ENCODE measurements at regions of chr16 and their contacts with region 1.

Region 1: DNA sequence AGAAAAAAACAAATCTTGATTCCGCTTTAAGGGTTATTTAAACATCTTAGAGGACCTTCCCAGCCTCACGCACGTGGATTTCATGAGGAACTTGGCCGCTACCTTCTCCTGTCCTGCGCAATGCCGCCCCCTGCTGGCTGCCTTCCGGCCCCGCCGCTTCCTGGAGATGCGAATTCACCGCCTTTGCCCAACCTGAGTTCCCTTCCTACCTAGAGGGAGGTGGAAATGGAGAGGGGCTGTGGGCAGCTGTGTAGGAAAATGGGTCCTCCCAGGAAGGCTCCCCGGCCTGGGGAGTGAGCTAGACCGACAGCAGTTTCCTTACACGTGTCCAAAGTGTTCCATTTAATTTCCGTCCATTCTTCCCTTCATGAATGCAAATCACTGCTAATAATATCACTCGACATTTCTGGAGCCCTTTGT is 1.0 kb upstream of the ABCC12 start:
- DNase-seq: peak; percentile 93
- H3K4me3 ChIP-seq: peak overlapping the region; percentile 11 to 36
- H3K27ac ChIP-seq: no peak overlapping the region
- H3K4me1 ChIP-seq: no peaks in the 10 kb centered on the region
- H3K27me3 ChIP-seq: no peaks in the 10 kb centered on the region
- CTCF ChIP-seq: peak; percentile 80 to 97 (median 92)
- POLR2A ChIP-seq: no peak

Region 2: GRCh38 chr16:47136101-47136820 is 1020.5 kb before region 1 on chr16:
- intact Hi-C with region 1: loop called (anchors 10 kb)
- DNase-seq: no peak
- H3K4me3 ChIP-seq: no peak overlapping the region
- H3K27ac ChIP-seq: no peak overlapping the region
- H3K4me1 ChIP-seq: no peaks in the 10 kb centered on the region
- H3K27me3 ChIP-seq: no peaks in the 10 kb centered on the region
- CTCF ChIP-seq: no peak
- POLR2A ChIP-seq: no peak

Region 3: DNA sequence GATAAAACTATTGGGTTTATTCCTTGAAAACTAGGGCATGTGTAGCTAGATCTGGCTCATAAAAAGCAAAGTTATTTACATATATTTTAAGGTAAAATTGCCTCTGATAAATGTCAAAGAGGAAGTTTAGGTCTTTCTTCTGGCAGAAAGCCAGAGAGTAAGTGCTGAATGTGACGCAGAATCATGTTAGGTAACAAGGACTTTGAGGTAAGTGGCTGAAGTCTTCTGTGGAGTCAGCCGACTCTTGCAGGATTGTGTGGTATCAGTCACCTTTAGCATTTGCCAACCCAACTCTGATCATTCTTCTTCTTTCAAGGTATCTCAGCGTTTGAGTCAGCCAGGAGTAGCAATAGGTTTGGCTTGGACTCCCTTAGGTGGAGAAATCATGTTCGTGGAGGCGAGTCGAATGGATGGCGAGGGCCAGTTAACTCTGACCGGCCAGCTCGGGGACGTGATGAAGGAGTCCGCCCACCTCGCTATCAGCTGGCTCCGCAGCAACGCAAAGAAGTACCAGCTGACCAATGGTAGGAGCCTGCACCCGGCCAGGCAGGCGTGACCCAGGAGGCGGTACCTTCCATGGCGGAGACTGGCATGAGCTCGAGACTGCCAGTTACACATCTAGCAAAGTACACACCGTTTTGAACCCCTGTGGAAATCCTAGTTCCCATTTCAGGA is 190.5 kb after region 1 on chr16:
- intact Hi-C with region 1: no loop called
- DNase-seq: no peak
- H3K4me3 ChIP-seq: no peak overlapping the region
- H3K27ac ChIP-seq: no peak overlapping the region
- H3K4me1 ChIP-seq: no peaks in the 10 kb centered on the region
- H3K27me3 ChIP-seq: no peaks in the 10 kb centered on the region
- CTCF ChIP-seq: no peak
- POLR2A ChIP-seq: no peak

Measured in testis (tissue), 5 donors.